Activated T-helper 1 cell treated with anti-CD3 and anti-CD28 coated beads, Interleukin-12 subunit alpha, Interleukin-12 subunit beta, Interleukin-2, Interleukin-4 antibody, amounts not matched to agents 30 ng/mL and 10 ng/mL and 1 ng/mL, durations not matched to agents 14 hours and 24 hours and 36 hours (primary cell): ENCODE measurements at regions of chr1 and their contacts with region 1.

Region 1: DNA sequence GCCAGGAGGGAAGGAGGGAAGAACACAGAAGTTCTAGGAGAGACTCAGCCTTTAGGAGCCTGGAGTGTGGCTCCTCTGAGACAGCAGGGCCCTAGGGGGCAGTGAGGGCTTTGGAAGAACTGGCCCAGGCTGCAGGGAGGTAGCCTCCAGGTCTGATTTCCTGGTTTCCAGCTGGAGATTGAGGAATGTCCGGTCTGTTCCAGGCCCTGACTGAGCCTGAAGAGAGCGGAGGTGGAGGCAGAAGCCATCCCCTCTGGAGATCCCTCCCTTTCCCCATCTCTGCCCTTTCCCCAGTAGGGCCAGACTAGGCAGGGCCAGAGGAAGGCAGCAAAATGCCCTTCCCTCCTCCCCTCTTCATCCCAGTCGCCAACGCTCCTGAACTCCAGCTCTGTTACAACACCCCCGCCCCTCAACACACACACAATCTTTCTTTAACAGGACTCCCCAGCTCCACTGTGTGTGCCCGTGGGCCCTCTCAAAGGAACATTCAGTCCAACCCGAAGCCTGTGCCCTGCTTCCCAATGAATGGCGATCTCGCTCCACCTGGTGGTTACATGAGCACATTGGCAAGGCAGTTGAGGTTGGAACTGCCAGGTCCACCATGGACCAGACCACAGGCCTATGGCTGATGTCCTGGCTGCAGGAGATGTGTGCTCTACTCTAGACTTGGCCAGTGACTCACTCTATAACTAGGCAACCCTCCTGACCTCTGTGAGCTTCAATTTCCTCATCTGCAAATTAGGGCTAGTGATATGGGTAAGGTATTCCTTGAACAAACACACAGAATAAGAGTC is 32.0 kb downstream of the MAP7D1 start:
- DNase-seq: peak; percentile 76
- H3K4me3 Mint-ChIP-seq: no peak overlapping the region
- H3K27ac Mint-ChIP-seq: peak overlapping the region; percentile 88
- H3K4me1 Mint-ChIP-seq: peaks cover 6% of the 10 kb centered on the region
- H3K27me3 Mint-ChIP-seq: no peaks in the 10 kb centered on the region

Region 2: GRCh38 chr1:36142121-36142520 is 45.9 kb before region 1 on chr1:
- intact Hi-C with region 1: no loop called
- DNase-seq: no peak
- H3K4me3 Mint-ChIP-seq: no peak overlapping the region
- H3K27ac Mint-ChIP-seq: no peak overlapping the region
- H3K4me1 Mint-ChIP-seq: peaks cover 43% of the 10 kb centered on the region
- H3K27me3 Mint-ChIP-seq: no peaks in the 10 kb centered on the region

Region 3: GRCh38 chr1:36285448-36286101 is 97.6 kb after region 1 on chr1:
- intact Hi-C with region 1: loop called (anchors 1 kb)
- DNase-seq: peak; percentile 53
- H3K4me3 Mint-ChIP-seq: no peak overlapping the region
- H3K27ac Mint-ChIP-seq: peak overlapping the region; percentile 63
- H3K4me1 Mint-ChIP-seq: peaks cover 42% of the 10 kb centered on the region
- H3K27me3 Mint-ChIP-seq: no peaks in the 10 kb centered on the region

Region 4: DNA sequence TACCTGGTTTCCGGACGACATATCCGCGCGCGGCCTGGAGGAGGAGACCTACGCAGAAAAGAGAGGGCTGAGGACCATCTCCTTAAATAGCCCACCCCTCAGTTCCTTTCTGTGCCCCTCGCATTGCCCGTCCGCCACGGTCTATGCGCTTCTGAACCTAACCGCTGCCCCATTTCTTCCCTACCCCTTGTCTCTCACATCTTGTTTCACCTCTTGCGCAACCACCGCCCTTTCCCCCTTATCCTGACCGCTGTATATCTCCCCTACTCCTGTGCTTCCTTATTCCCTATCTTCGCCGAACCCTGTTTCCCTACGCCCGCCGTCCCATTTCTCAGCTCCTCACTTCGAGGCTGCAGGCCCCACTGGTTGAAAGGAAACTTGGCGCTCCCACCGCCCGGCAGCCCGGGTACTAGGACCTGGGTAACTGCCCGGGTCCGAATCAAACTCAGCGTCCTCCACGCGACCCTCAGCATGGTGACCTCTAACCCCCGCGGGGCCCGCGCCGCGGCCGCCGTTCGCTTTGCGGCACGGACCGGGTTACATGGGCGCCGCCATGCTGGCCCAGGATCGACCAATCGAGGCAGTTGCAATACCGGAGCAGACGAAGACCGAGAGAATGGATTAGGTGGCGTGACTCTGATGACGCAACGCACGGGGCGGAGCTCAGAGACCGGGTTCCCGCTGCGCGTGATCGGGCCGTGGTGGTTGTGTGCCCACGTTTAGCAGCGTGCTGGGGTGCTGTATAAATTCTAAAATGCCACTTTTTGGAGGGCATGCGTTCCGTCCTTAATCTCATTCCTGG is 276.0 kb after region 1 on chr1 and contains the start of gene MRPS15:
- intact Hi-C with region 1: no loop called
- DNase-seq: peak; percentile 92
- H3K4me3 Mint-ChIP-seq: peak within 1 kb of the TSS; percentile 100
- H3K27ac Mint-ChIP-seq: peak within 1 kb of the TSS; percentile 97
- H3K4me1 Mint-ChIP-seq: peaks cover 63% of the 10 kb centered on the region
- H3K27me3 Mint-ChIP-seq: no peaks in the 10 kb centered on the region
- total RNA-seq, gene MRPS15: 118 and 121 TPM in 2 replicates

Region 5: DNA sequence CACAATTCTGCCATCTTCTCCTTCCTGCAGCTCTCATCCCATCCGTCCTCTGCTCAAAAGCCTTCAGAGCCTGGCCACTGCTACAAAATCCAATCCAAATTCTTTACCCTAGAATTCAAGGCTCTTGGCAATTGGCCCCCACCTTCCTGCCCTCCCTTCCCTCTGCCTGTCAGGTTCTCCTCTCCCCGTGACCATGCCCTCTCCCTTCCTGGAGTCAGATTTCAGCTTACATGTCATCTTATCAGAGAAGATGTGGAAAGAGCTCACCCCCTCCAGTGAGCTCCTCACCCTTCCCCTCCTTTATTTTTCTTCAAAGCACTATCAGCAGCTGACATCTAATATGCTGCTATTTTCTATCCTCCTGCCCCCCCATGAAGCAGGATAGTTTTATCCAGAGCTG is 759.4 kb after region 1 on chr1:
- intact Hi-C with region 1: no loop called
- DNase-seq: no peak
- H3K4me3 Mint-ChIP-seq: no peak overlapping the region
- H3K27ac Mint-ChIP-seq: no peak overlapping the region
- H3K4me1 Mint-ChIP-seq: no peaks in the 10 kb centered on the region
- H3K27me3 Mint-ChIP-seq: no peaks in the 10 kb centered on the region